Activated CD4-positive, alpha-beta memory T cell treated with anti-CD3 and anti-CD28 coated beads for 36 hours (primary cell): ENCODE measurements at regions of chr15 and their contacts with region 1.

Region 1: GRCh38 chr15:98881526-98882520 is 125.8 kb downstream of the PGPEP1L start:
- DNase-seq: no peak
- H3K4me3 Mint-ChIP-seq: no peak overlapping the region
- H3K27ac Mint-ChIP-seq: no peak overlapping the region
- H3K4me1 Mint-ChIP-seq: peaks cover 2% of the 10 kb centered on the region
- H3K27me3 Mint-ChIP-seq: no peaks in the 10 kb centered on the region

Region 2: GRCh38 chr15:98779463-98780071 is 102.3 kb before region 1 on chr15:
- CTCF ChIA-PET with region 1: interaction called, 83 read pairs
- POLR2A ChIA-PET with region 1: no interaction called
- intact Hi-C with region 1: loop called (anchors 1 kb)
- DNase-seq: peak; percentile 82
- H3K4me3 Mint-ChIP-seq: peak overlapping the region; percentile 21
- H3K27ac Mint-ChIP-seq: no peak overlapping the region
- H3K4me1 Mint-ChIP-seq: peaks cover 20% of the 10 kb centered on the region
- H3K27me3 Mint-ChIP-seq: peaks cover 2% of the 10 kb centered on the region

Region 3: GRCh38 chr15:98791047-98791701 is 90.6 kb before region 1 on chr15:
- CTCF ChIA-PET with region 1: interaction called, 11 read pairs
- POLR2A ChIA-PET with region 1: interaction called, 3 read pairs
- intact Hi-C with region 1: no loop called
- DNase-seq: no peak
- H3K4me3 Mint-ChIP-seq: no peak overlapping the region
- H3K27ac Mint-ChIP-seq: no peak overlapping the region
- H3K4me1 Mint-ChIP-seq: peaks cover 52% of the 10 kb centered on the region
- H3K27me3 Mint-ChIP-seq: no peaks in the 10 kb centered on the region

Region 4: GRCh38 chr15:98856218-98856907 is 25.5 kb before region 1 on chr15:
- CTCF ChIA-PET with region 1: interaction called, 25 read pairs
- POLR2A ChIA-PET with region 1: no interaction called
- intact Hi-C with region 1: no loop called
- DNase-seq: no peak
- H3K4me3 Mint-ChIP-seq: no peak overlapping the region
- H3K27ac Mint-ChIP-seq: no peak overlapping the region
- H3K4me1 Mint-ChIP-seq: peaks cover 48% of the 10 kb centered on the region
- H3K27me3 Mint-ChIP-seq: no peaks in the 10 kb centered on the region

Region 5: DNA sequence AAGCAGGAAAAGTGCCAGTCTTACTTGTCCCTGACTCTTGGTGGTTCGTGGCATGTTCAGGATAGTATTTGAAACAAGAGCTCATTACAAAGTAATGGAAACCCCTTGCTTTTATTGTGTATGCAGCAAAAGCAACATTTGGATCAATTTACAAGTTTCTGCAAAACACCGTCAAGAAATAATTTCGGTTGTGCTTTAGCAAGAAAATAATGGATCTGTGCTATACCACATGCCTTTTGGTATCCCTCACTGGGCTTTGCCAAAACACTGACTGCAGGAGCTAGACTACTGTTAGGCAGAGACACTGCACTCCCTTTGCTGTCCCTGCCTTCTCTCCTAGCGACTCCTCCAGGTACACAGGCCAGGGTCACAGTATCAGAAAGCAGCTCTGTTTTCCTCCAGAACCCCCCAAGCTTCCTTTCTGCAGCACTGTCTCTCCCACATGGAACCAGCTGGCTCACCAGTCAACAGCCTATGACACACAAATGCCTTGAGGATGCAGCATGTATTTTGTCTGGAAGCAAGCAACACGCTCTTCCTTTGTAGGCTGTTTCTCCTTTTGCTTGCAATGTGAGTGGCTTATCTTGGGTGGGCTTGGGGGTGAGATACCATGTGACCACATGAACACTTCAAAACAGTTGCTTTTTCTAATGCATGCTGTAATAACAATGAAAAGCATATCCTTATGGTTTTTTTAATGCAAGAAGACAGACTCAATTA is 14.3 kb after region 1 on chr15:
- CTCF ChIA-PET with region 1: interaction called, 16 read pairs
- POLR2A ChIA-PET with region 1: interaction called, 4 read pairs
- intact Hi-C with region 1: no loop called
- DNase-seq: no peak
- H3K4me3 Mint-ChIP-seq: no peak overlapping the region
- H3K27ac Mint-ChIP-seq: no peak overlapping the region
- H3K4me1 Mint-ChIP-seq: peaks cover under 1% of the 10 kb centered on the region
- H3K27me3 Mint-ChIP-seq: no peaks in the 10 kb centered on the region

Region 6: GRCh38 chr15:98954411-98954810 is 72.6 kb after region 1 on chr15:
- CTCF ChIA-PET with region 1: no interaction called
- POLR2A ChIA-PET with region 1: no interaction called
- intact Hi-C with region 1: no loop called
- DNase-seq: no peak
- H3K4me3 Mint-ChIP-seq: no peak overlapping the region
- H3K27ac Mint-ChIP-seq: no peak overlapping the region
- H3K4me1 Mint-ChIP-seq: peaks cover 18% of the 10 kb centered on the region
- H3K27me3 Mint-ChIP-seq: no peaks in the 10 kb centered on the region

Region 7: DNA sequence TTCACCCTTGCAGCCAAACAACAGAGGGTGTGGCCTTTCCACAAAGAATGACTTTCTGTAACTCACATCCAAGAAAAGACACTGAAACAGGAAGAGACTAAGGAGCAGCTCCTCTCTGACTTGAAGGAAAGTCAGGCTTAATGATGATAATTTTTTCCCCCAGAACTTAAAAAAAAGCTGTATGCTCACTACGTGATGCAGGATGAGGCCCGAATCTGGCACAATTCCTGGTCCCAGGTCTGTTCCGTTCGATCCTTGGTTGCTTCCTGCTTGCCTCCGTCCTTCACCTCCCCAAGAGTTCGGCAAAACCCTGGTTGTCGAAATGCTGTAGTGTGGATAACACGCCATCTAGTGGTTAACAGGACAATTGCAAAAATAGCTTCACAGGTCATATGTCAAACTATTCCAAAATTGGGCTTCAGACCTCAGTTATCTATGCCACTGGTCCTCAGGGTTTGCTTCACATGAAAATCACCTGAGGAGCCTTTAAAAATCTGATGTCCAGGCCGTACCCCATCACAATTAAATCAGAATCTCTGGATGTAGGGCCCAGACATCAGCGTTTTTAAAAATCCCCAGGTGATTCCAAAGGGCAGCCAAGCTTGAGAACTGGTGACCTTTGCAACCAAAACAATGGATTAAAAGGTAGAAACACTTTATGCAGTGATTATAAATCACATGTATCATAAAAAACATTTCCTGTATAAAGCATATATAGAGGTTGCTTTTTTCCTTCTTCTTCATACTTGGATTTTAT is 194.9 kb after region 1 on chr15:
- CTCF ChIA-PET with region 1: interaction called, 23 read pairs
- POLR2A ChIA-PET with region 1: no interaction called
- intact Hi-C with region 1: no loop called
- DNase-seq: peak; percentile 43
- H3K4me3 Mint-ChIP-seq: peak overlapping the region; percentile 70
- H3K27ac Mint-ChIP-seq: no peak overlapping the region
- H3K4me1 Mint-ChIP-seq: peaks cover 4% of the 10 kb centered on the region
- H3K27me3 Mint-ChIP-seq: peaks cover 9% of the 10 kb centered on the region